Endothelial cell of umbilical vein (primary cell): ENCODE measurements at regions of chr12 and their contacts with region 1.

Region 1: DNA sequence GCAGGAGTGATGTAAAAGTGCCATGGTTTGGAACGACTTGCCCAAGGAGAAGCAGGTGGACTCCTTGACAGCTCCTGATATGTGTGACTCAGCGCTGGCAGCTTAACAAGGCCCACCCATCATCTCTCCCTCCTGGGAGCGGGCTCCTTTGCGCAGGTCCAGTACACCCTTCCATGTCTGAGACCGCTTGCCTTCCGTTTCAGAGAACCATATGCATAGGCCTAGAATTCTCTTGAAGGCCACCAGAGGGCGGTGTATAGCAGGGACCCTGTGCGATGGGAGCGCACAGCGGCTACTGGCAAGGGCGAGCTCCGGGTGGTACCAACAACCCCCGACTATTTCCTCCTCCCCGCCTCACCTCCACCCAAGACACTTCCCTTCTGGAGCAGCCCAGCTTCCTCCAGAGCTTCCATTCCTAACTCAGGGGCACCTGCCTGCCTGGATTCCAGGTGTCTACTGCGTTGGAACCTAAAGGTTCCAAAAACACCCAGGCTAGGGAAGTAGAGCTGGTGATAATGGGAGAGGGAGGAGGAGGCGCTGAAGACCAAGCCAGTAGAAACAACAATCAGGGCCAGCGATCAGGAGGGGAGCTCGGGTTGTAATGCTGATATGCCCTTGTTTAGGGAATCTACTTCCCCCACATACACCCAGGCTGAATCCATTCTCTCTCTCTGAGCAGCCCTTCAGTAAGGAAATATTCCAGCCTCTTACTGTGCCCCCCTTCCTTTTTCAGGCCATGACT is 6.2 kb downstream of the DHH start:
- DNase-seq: peak; percentile 91
- H3K4me3 ChIP-seq: no peak overlapping the region
- H3K27ac ChIP-seq: no peak overlapping the region
- H3K4me1 ChIP-seq: peaks cover 39% of the 10 kb centered on the region
- H3K27me3 ChIP-seq: no peaks in the 10 kb centered on the region
- CTCF ChIP-seq: peak; percentile 90 to 95
- POLR2A ChIP-seq: no peak

Region 2: DNA sequence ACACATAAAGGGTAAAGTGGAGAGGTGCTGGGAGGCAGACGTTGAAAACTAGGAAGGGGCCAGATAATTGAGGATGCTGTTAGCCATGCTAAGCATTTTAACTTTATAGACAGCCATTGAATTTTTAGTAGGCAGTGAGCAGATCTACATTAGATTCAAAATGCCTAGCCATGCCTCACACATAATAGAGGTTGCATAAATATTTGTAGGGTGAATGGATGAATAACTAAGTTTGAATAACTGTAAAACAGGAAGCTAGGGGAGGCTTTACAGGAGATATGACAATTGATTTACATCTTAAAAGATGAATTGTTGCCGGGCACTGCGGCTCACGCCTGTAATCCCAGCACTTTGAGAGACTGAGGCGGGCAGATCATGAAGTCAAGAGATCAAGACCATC is 359.6 kb before region 1 on chr12:
- CTCF ChIA-PET with region 1: no interaction called
- POLR2A ChIA-PET with region 1: no interaction called
- dilution Hi-C with region 1: no loop called
- intact Hi-C with region 1: no loop called
- DNase-seq: no peak
- H3K4me3 ChIP-seq: no peak overlapping the region
- H3K27ac ChIP-seq: no peak overlapping the region
- H3K4me1 ChIP-seq: no peaks in the 10 kb centered on the region
- H3K27me3 ChIP-seq: peaks cover 0 to 2% of the 10 kb centered on the region in 2 experiments
- CTCF ChIP-seq: no peak
- POLR2A ChIP-seq: no peak

Region 3: GRCh38 chr12:48795480-48796455 is 292.6 kb before region 1 on chr12:
- CTCF ChIA-PET with region 1: no interaction called
- POLR2A ChIA-PET with region 1: no interaction called
- dilution Hi-C with region 1: no loop called
- intact Hi-C with region 1: no loop called
- DNase-seq: peak; percentile 84
- H3K4me3 ChIP-seq: no peak overlapping the region
- H3K27ac ChIP-seq: no peak overlapping the region
- H3K4me1 ChIP-seq: no peaks in the 10 kb centered on the region
- H3K27me3 ChIP-seq: peaks cover 0 to 1% of the 10 kb centered on the region in 2 experiments
- CTCF ChIP-seq: peak; percentile 84 to 89
- POLR2A ChIP-seq: no peak

Region 4: GRCh38 chr12:48977315-48978281 is 110.8 kb before region 1 on chr12:
- CTCF ChIA-PET with region 1: no interaction called
- POLR2A ChIA-PET with region 1: no interaction called
- dilution Hi-C with region 1: no loop called
- intact Hi-C with region 1: no loop called
- DNase-seq: no peak
- H3K4me3 ChIP-seq: no peak overlapping the region
- H3K27ac ChIP-seq: no peak overlapping the region
- H3K4me1 ChIP-seq: peaks cover 13% of the 10 kb centered on the region
- H3K27me3 ChIP-seq: peaks cover 63 to 66% of the 10 kb centered on the region in 2 experiments
- CTCF ChIP-seq: peak; percentile 62 to 90
- POLR2A ChIP-seq: no peak

Region 5: DNA sequence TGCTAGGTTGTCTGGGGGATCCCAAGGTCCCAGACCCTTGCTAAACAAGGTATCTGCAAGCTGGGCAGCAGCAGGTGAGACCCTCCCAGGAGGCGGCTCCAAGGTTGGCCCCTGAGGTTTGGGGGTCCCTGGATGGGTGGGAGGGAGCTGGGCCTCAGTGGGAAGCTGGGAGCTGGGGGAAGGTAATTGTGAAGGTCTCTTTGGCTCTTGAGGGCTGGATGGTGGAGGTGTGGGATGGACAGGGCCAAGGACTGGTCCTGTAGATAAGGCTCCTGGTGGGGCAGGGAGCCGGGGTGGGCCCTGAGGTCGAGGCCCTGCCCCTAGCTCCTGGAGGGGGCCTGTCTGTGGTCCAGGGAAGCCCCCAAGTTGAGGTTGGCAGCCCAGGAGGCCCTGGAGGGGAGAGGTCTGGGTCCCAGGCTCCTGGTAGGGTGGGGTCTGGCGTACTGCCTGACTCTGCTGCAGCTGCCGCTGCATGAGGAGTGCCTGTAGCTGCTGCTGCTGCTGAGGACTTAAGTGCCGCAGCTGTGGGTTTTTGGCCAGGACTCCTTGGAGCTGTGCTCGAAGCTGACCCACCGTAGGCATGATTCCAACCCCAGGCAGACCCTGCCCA is 56.7 kb before region 1 on chr12:
- CTCF ChIA-PET with region 1: no interaction called
- POLR2A ChIA-PET with region 1: no interaction called
- dilution Hi-C with region 1: no loop called
- intact Hi-C with region 1: no loop called
- DNase-seq: no peak
- H3K4me3 ChIP-seq: no peak overlapping the region
- H3K27ac ChIP-seq: no peak overlapping the region
- H3K4me1 ChIP-seq: no peaks in the 10 kb centered on the region
- H3K27me3 ChIP-seq: no peaks in the 10 kb centered on the region
- CTCF ChIP-seq: no peak
- POLR2A ChIP-seq: no peak

Region 6: DNA sequence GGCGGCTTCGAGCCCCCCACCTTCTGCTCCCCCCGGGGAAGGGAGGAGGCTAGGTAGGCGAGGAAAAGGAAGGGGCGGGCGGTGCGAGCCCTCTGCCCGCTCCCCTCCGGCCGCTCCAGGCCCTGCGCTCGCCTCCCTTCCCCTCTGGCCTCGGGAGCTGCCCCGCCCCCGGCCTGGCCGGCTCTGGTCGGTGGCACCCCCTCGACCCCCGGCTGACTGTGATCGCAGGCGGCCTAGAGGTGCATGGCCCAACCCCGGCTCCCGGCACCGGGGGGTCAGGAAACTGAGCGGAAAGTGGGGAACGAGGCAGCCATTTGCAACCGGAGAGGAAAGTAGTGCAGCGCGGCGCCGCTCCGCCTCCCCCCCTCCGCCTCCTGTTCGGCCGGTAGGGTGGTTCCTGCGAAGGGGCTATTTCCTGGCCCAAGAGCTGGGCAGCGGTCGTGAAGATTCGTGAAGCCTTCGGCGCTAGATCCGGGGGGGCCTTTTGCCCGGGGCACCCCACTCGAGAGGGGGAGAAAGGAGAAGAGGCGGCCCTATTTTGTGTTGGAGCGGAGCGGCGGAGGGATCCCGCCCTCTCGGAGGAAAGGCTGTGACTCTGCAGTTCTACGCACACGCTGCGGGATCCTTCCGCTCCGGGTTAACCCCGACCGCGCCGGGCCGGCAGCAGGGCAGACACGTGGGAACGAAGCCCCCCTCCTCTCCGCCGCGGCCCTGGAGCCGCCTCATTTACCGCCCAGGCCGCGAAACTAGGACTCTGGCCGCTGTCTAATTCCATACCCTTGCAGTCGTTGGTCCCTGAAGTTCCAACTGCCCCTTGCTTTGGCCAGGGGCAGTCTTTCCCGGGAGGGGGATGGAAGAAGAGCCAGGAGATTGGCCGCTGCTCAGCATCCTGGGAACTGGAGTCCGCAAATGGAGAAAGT is 27.9 kb before region 1 on chr12 and contains the start of gene KMT2D:
- CTCF ChIA-PET with region 1: interaction called, 179 read pairs
- POLR2A ChIA-PET with region 1: no interaction called
- dilution Hi-C with region 1: no loop called
- intact Hi-C with region 1: loop called (anchors 1 kb)
- DNase-seq: peak; percentile 92
- H3K4me3 ChIP-seq: peak within 1 kb of the TSS; percentile 73 to 97 (median 77)
- H3K27ac ChIP-seq: peak within 1 kb of the TSS; percentile 93
- H3K4me1 ChIP-seq: peaks cover 39% of the 10 kb centered on the region
- H3K27me3 ChIP-seq: no peaks in the 10 kb centered on the region
- CTCF ChIP-seq: peak; percentile 6 to 13
- POLR2A ChIP-seq: peak; percentile 85
- total RNA-seq, gene KMT2D: 106 and 120 TPM in 2 replicates

Region 7: DNA sequence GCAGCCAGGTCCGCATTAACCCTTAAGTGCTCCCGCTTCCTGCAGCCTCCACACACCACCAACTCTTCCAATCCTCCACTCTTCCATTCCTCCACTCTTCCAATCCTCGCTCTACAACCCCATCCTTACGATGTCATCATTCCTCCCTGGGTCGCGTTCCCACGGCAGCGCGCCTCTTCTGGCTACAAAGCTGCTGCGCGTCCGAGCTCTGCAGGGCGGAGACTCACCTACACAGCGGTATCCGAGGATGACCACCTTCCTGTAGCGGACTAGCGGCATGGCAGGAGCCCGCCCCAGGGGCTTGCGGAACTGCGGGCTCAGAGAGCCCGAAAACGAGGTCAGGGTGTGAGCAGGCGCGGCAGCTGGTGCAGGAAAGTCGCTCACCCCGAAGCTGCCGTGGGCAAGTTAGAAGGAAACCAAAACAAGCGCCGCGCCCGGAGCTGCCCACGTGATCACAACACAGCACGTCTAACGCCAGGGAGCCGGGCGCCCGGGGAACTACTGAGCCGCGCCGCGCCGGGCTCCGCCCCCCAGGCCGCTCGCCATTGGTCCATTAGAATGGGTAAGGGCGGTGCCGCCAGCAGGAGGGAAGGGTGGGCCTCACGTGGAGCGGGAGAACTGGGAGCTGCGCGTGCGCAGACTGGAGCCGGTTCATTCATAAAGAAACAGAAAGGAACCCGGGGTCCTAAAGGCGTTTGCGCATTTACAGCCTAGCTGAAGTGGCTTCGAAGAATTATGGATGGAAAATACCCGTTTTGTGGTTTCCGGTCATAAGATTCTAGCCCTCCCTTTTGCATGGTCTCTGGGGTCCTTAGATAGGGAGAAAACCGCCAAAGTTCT is 18.6 kb before region 1 on chr12 and contains the start of gene RHEBL1:
- CTCF ChIA-PET with region 1: interaction called, 179 read pairs
- POLR2A ChIA-PET with region 1: interaction called, 4 read pairs
- dilution Hi-C with region 1: no loop called
- intact Hi-C with region 1: loop called (anchors 1 kb)
- DNase-seq: peak; percentile 98
- H3K4me3 ChIP-seq: peak within 1 kb of the TSS; percentile 61 to 81 (median 64)
- H3K27ac ChIP-seq: peak within 1 kb of the TSS; percentile 30
- H3K4me1 ChIP-seq: peaks cover 12% of the 10 kb centered on the region
- H3K27me3 ChIP-seq: no peaks in the 10 kb centered on the region
- CTCF ChIP-seq: peak in 1 of 2 donors; percentile 13
- POLR2A ChIP-seq: peak; percentile 70
- total RNA-seq, gene RHEBL1: 2.3 and 2.6 TPM in 2 replicates

Region 8: DNA sequence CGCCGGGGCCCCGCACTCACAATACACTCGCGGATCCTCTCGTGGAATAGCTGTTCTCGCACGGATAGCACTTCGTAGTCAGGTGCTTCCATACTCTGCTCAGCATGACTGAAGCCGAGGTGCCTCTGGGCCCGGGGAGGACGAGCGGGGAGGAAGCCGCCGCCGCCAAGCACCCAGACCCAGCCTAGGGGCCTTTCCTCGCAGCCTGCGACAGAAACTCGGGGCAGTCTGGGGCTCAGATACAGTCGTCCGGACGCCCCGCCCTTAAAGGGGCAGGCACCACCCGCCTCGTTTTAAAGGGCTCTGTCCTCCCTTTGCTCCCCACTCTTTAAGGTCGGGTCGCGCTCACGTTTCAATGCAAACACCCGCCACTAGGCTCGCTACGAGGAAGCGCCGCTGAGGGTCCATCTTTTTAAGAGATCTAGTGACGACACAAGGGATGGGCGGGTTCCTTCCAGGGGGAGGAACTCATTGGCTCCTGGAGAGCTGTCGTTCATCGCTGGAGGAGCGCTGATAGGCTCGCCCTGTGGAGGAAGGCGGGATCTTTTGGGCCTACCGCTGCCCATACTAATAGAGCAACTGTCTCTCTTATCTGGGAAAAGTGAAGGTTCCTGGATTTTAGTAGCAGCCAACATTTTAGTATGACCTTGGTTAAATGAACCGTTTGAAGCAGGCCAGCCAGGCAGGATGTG is 22.2 kb after region 1 on chr12 and contains the start of gene LMBR1L:
- CTCF ChIA-PET with region 1: interaction called, 188 read pairs
- POLR2A ChIA-PET with region 1: interaction called, 4 read pairs
- dilution Hi-C with region 1: no loop called
- intact Hi-C with region 1: no loop called
- DNase-seq: peak; percentile 98
- H3K4me3 ChIP-seq: peak within 1 kb of the TSS; percentile 36 to 92 (median 68)
- H3K27ac ChIP-seq: peak within 1 kb of the TSS; percentile 36
- H3K4me1 ChIP-seq: peaks cover 20% of the 10 kb centered on the region
- H3K27me3 ChIP-seq: no peaks in the 10 kb centered on the region
- CTCF ChIP-seq: peak in 1 of 2 donors; percentile 43
- POLR2A ChIP-seq: peak; percentile 74
- total RNA-seq, gene LMBR1L: 92.8 and 106 TPM in 2 replicates

Region 9: DNA sequence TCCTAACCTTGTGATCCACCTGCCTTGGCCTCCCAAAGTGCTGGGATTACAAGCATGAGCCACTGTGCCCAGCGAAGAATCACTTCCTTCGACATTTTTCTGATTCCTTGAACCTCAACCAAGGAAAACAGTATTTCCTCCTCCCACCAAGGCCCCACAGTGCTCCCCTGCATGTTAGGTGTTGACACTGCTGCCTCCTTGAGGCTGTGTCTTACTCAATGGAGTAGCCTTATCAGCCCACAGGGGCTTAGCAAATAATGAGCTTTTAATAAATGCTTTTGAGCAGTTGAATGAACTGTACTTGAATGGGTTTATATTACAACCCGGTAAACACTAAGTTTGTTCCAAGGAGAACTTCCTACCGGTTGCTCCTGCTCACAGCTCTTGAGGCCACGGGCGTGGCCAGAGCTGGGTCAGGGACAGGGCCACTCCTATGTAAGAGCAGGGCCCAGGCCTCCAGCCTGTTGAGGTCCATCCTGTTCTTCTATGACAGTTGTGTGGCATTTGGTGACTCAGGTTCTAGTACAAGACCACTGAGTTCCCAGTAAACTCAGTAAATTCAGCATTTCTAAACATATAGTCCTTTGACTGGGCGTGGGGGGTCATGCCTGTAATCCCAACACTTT is 137.3 kb after region 1 on chr12:
- CTCF ChIA-PET with region 1: interaction called, 29 read pairs
- POLR2A ChIA-PET with region 1: no interaction called
- dilution Hi-C with region 1: no loop called
- intact Hi-C with region 1: no loop called
- DNase-seq: peak; percentile 56
- H3K4me3 ChIP-seq: no peak overlapping the region
- H3K27ac ChIP-seq: no peak overlapping the region
- H3K4me1 ChIP-seq: peaks cover 5% of the 10 kb centered on the region
- H3K27me3 ChIP-seq: no peaks in the 10 kb centered on the region
- CTCF ChIP-seq: peak; percentile 17 to 28
- POLR2A ChIP-seq: no peak